Dendritic cell treated with granulocyte-macrophage colony-stimulating factor and Interleukin-4, amounts not matched to agents 40 ng/mL and 50 ng/mL, for 4 days (primary cell): ENCODE measurements at regions of chr17 and their contacts with region 1.

Region 1: GRCh38 chr17:1684378-1685189 is at the start of gene PRPF8:
- H3K4me3 Mint-ChIP-seq: peak within 1 kb of the TSS; percentile 97
- H3K27ac Mint-ChIP-seq: peak within 1 kb of the TSS; percentile 97
- H3K4me1 Mint-ChIP-seq: peaks cover 34% of the 10 kb centered on the region
- H3K27me3 Mint-ChIP-seq: peaks cover 2% of the 10 kb centered on the region

Region 2: GRCh38 chr17:1709971-1710806 is 25.6 kb after region 1 on chr17 and contains the start of gene TLCD2:
- intact Hi-C with region 1: loop called (anchors 2 kb)
- H3K4me3 Mint-ChIP-seq: peak within 1 kb of the TSS; percentile 77
- H3K27ac Mint-ChIP-seq: peak within 1 kb of the TSS; percentile 58
- H3K4me1 Mint-ChIP-seq: peaks cover 46% of the 10 kb centered on the region
- H3K27me3 Mint-ChIP-seq: peaks cover 29% of the 10 kb centered on the region

Region 3: GRCh38 chr17:2172077-2172851 is 487.7 kb after region 1 on chr17:
- intact Hi-C with region 1: no loop called
- H3K4me3 Mint-ChIP-seq: no peak overlapping the region
- H3K27ac Mint-ChIP-seq: no peak overlapping the region
- H3K4me1 Mint-ChIP-seq: peaks cover 24% of the 10 kb centered on the region
- H3K27me3 Mint-ChIP-seq: no peaks in the 10 kb centered on the region